CD14-positive monocyte (primary cell): ENCODE measurements at regions of chr18 and their contacts with region 1.

Region 1: GRCh38 chr18:63936156-63936931 is 12.8 kb upstream of the HMSD start:
- DNase-seq: peak; percentile 87 to 91 (median 91)
- H3K4me3 ChIP-seq: peak overlapping the region; percentile 73 to 87 (median 74)
- H3K4me3 Mint-ChIP-seq: no peak overlapping the region
- H3K27ac ChIP-seq: peak overlapping the region; percentile 78 to 89
- H3K27ac Mint-ChIP-seq: peak overlapping the region in 6 of 7 donors; percentile 59 to 90 (median 86)
- H3K4me1 ChIP-seq: peaks cover 19 to 27% of the 10 kb centered on the region in 2 donors
- H3K4me1 Mint-ChIP-seq: peaks cover 7% of the 10 kb centered on the region
- H3K27me3 ChIP-seq: no peaks in the 10 kb centered on the region
- H3K27me3 Mint-ChIP-seq: peaks cover 0 to under 1% (median 0%) of the 10 kb centered on the region in 3 donors
- CTCF ChIP-seq: peak; percentile 81

Region 2: GRCh38 chr18:63834471-63835113 is 101.8 kb before region 1 on chr18:
- intact Hi-C with region 1: loop called in 1 of 2 experiments (anchors 5 kb)
- DNase-seq: peak; percentile 16 to 46 (median 20)
- H3K4me3 ChIP-seq: no peak overlapping the region
- H3K4me3 Mint-ChIP-seq: no peak overlapping the region
- H3K27ac ChIP-seq: no peak overlapping the region
- H3K27ac Mint-ChIP-seq: no peak overlapping the region
- H3K4me1 ChIP-seq: peaks cover 31 to 41% of the 10 kb centered on the region in 2 donors
- H3K4me1 Mint-ChIP-seq: peaks cover 32% of the 10 kb centered on the region
- H3K27me3 ChIP-seq: no peaks in the 10 kb centered on the region
- H3K27me3 Mint-ChIP-seq: no peaks in the 10 kb centered on the region
- CTCF ChIP-seq: no peak

Region 3: DNA sequence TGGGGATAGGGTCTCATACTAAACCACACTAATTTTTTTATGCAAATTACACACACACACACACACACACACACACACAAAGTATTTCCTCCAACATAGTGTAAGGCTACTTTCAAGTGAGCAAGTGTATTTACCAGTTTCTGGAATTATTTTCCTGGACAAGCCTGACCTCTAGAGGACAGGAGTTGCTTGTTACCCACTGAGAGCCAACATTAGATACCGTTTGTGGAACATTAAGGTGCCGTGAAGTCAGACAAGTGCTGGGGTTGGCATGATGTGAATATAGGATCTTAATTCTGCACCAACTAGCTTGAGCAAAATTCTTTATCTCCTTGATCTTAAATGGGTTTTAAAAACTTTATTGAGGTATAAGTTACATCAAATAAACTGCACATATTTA is 88.2 kb before region 1 on chr18:
- intact Hi-C with region 1: loop called in 1 of 2 experiments (anchors 5 kb)
- DNase-seq: peak; percentile 38 to 71 (median 63)
- H3K4me3 ChIP-seq: no peak overlapping the region
- H3K4me3 Mint-ChIP-seq: no peak overlapping the region
- H3K27ac ChIP-seq: no peak overlapping the region
- H3K27ac Mint-ChIP-seq: no peak overlapping the region
- H3K4me1 ChIP-seq: peaks cover 6 to 12% of the 10 kb centered on the region in 2 donors
- H3K4me1 Mint-ChIP-seq: peaks cover 9% of the 10 kb centered on the region
- H3K27me3 ChIP-seq: no peaks in the 10 kb centered on the region
- H3K27me3 Mint-ChIP-seq: peaks cover 0 to 2% (median under 1%) of the 10 kb centered on the region in 3 donors
- CTCF ChIP-seq: peak; percentile 59